ENCODE measurements at regions of chr11 and their contacts with region 1.

Region 1: DNA sequence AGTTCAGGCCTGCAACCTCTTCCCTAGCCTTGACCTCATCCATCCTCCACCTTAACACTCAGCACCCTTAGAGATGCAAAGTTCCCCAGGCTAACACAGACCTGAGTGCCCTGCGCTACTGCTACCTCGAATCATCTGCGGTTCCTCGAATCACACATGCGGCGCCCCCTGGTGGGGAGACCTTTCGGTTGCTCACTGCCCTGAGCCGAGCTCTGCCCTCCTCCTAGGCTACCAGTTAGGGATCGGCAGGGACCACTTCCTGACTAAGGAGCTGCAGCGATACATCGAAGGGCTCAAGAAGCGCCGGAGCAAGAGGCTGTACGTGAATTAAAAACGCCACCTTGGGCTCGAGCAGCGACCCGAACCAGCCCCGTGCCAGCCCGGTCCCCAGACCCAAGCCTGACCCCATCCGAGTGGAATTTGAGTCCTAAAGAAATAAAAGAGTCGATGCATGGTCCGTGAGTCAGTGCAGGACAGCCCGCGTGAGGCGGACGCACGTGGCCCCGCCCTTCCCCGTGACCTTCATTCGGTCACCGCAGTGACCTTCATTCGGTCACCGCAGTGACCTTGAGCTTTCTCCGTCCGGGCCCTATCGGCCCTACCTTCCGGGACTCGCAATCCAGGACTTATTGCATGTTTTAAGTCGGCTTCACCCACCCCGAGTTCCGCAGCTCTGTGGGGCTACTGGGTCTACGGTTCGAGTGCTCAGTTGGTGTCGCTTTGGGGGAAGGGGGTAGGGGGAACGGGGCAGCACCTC is 830 bp upstream of the ESRRA start:
- DNase-seq: peak; percentile 73 to 96
- H3K4me3 ChIP-seq: peak overlapping the region; percentile 59 to 73
- H3K27ac ChIP-seq: peak overlapping the region; percentile 68 to 86
- H3K4me1 ChIP-seq: peaks cover 14 to 22% of the 10 kb centered on the region in 2 donors
- H3K27me3 ChIP-seq: no peaks in the 10 kb centered on the region
- CTCF ChIP-seq: peak; percentile 63 to 89 (median 80)

Region 2: GRCh38 chr11:64225612-64226506 is 78.6 kb before region 1 on chr11 and contains the starts of genes NUDT22 and TRPT1:
- intact Hi-C with region 1: loop called (anchors 5 kb)
- DNase-seq: peak; percentile 61 to 96
- H3K4me3 ChIP-seq: peak within 1 kb of the TSS; percentile 61 to 77
- H3K27ac ChIP-seq: peak within 1 kb of the TSS; percentile 88 to 89
- H3K4me1 ChIP-seq: peaks cover 7 to 32% of the 10 kb centered on the region in 2 donors
- H3K27me3 ChIP-seq: no peaks in the 10 kb centered on the region
- CTCF ChIP-seq: peak in 2 of 3 experiments; percentile 11 to 15
- total RNA-seq, gene NUDT22: 158 TPM
- total RNA-seq, gene TRPT1: 224 TPM

Region 3: GRCh38 chr11:64251016-64251752 is 53.3 kb before region 1 on chr11 and contains the start of gene PLCB3:
- intact Hi-C with region 1: loop called (anchors 1 kb)
- DNase-seq: no peak
- H3K4me3 ChIP-seq: peak within 1 kb of the TSS; percentile 74 to 86
- H3K27ac ChIP-seq: peak within 1 kb of the TSS; percentile 53 to 68
- H3K4me1 ChIP-seq: peaks cover 15 to 29% of the 10 kb centered on the region in 2 donors
- H3K27me3 ChIP-seq: no peaks in the 10 kb centered on the region
- CTCF ChIP-seq: peak; percentile 67 to 82 (median 73)
- total RNA-seq, gene PLCB3: 54.0 TPM

Region 4: GRCh38 chr11:64284048-64284961 is 20.2 kb before region 1 on chr11 and contains the start of gene BAD:
- intact Hi-C with region 1: loop called (anchors 1 kb)
- DNase-seq: peak; percentile 77 to 97
- H3K4me3 ChIP-seq: peak within 1 kb of the TSS; percentile 82 to 96
- H3K27ac ChIP-seq: peak within 1 kb of the TSS; percentile 87 to 95
- H3K4me1 ChIP-seq: peaks cover 4 to 20% of the 10 kb centered on the region in 2 donors
- H3K27me3 ChIP-seq: no peaks in the 10 kb centered on the region
- CTCF ChIP-seq: no peak
- total RNA-seq, gene BAD: 175 TPM

Region 5: DNA sequence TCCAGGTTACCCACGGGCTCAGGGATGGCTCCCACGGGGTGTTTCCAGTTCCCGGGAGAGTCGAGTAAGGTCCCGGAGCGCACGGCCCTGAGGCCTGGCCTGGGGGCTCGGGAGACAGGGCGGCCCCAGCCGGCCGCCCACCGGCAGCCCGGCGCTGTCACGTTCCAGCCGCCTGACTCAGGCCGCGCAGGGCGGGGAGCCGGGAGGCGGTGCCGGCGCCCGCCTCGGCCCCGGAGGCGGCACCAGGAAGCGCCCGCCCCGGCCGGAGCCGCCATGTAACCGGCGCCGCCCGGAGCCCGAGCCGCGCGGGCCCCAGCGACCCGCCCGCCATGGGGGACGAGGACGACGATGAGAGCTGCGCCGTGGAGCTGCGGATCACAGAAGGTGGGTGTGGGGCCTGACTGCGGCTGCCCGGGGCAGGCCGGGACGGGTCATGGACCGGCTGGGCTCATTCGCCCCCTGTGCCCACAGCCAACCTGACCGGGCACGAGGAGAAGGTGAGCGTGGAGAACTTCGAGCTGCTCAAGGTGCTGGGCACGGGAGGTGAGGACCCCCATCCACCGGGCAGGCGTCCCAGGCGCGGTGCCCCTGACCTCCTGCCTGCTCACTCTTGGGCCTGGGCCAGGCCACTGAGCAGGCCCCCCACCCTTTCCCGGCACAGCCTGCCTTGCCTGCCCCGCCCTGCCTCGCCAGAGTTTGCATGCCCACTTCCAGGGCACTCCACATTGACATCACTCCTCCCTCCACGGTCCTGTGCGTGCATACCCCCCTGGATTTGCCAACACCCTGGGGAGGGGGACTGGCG is 54.6 kb after region 1 on chr11 and contains the start of gene RPS6KA4:
- intact Hi-C with region 1: loop called (anchors 2 kb)
- DNase-seq: peak in 1 of 2 donors; percentile 83
- H3K4me3 ChIP-seq: peak within 1 kb of the TSS; percentile 75 to 95
- H3K27ac ChIP-seq: peak within 1 kb of the TSS; percentile 84 to 88
- H3K4me1 ChIP-seq: peaks cover 20 to 32% of the 10 kb centered on the region in 2 donors
- H3K27me3 ChIP-seq: no peaks in the 10 kb centered on the region
- CTCF ChIP-seq: peak in 1 of 3 experiments; percentile 16
- total RNA-seq, gene RPS6KA4: 81.5 TPM